ENCODE measurements at regions of chr11 and their contacts with region 1.

Region 1: GRCh38 chr11:304915-305843 is 2.4 kb upstream of the IFITM2 start:
- DNase-seq: peak in 6 of 9 experiments; percentile 55 to 84 (median 72)
- ATAC-seq: peak; percentile 30
- H3K4me3 ChIP-seq: no peak overlapping the region
- H3K4me3 Mint-ChIP-seq: peak overlapping the region; percentile 5
- H3K27ac ChIP-seq: peak overlapping the region in 1 of 2 experiments; percentile 40
- H3K27ac Mint-ChIP-seq: peak overlapping the region; percentile 43
- H3K4me1 ChIP-seq: peaks cover 59% of the 10 kb centered on the region
- H3K4me1 Mint-ChIP-seq: peaks cover 58% of the 10 kb centered on the region
- H3K27me3 ChIP-seq: no peaks in the 10 kb centered on the region
- H3K27me3 Mint-ChIP-seq: no peaks in the 10 kb centered on the region
- CTCF ChIP-seq: peak; percentile 75

Region 2: DNA sequence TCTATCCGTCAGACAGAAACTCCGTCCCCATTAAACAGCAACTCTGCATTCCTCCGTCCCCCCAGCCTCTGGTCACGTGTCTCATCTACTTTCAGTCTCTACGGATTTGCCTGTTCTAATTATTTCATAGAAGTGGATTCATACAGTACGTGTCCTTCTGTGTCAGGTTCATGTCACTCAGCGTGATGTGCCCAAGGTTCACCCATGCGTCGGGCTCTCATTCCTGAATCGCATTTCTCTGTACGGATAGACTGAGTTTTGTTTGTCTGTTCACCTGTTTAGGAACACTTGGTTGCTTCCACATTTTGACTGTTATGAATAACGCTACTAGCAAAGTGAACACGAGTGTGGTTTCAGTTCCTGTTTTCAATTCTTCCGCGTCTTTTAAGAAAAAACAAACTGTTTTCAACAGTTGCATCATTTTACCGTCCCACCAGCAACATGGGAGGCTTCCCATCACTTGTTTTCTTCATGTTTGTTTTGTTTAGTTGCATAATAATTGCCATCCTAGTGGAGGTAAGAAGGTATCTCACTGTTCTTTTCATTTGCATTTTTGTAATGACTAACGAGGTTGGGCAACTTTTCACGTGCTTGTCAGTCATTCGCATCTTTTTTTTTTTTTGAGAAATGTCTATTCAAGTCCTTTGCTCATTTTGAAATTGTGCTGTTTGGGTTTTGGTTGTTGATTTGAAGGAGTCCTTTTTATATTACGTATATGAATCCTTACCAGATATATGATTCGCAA is 35.9 kb before region 1 on chr11:
- CTCF ChIA-PET with region 1: interaction called, 4 read pairs
- POLR2A ChIA-PET with region 1: interaction called, 6 read pairs
- intact Hi-C with region 1: loop called in 1 of 2 experiments (anchors 5 kb)
- DNase-seq: peak in 5 of 9 experiments; percentile 60 to 90 (median 77)
- ATAC-seq: peak; percentile 69
- H3K4me3 ChIP-seq: peak overlapping the region; percentile 38 to 60
- H3K4me3 Mint-ChIP-seq: peak overlapping the region; percentile 85
- H3K27ac ChIP-seq: peak overlapping the region; percentile 76 to 96
- H3K27ac Mint-ChIP-seq: peak overlapping the region; percentile 98
- H3K4me1 ChIP-seq: peaks cover 23% of the 10 kb centered on the region
- H3K4me1 Mint-ChIP-seq: peaks cover 30% of the 10 kb centered on the region
- H3K27me3 ChIP-seq: no peaks in the 10 kb centered on the region
- H3K27me3 Mint-ChIP-seq: no peaks in the 10 kb centered on the region
- CTCF ChIP-seq: no peak

Region 3: GRCh38 chr11:288328-289144 is 16.6 kb before region 1 on chr11 and contains the start of gene PGGHG:
- CTCF ChIA-PET with region 1: interaction called, 49 read pairs
- POLR2A ChIA-PET with region 1: interaction called, 37 read pairs
- intact Hi-C with region 1: no loop called
- DNase-seq: peak in 7 of 9 experiments; percentile 53 to 78 (median 69)
- ATAC-seq: peak; percentile 25
- H3K4me3 ChIP-seq: peak within 1 kb of the TSS; percentile 56 to 94
- H3K4me3 Mint-ChIP-seq: peak within 1 kb of the TSS; percentile 99
- H3K27ac ChIP-seq: peak within 1 kb of the TSS; percentile 66 to 83
- H3K27ac Mint-ChIP-seq: peak within 1 kb of the TSS; percentile 99
- H3K4me1 ChIP-seq: peaks cover 55% of the 10 kb centered on the region
- H3K4me1 Mint-ChIP-seq: peaks cover 58% of the 10 kb centered on the region
- H3K27me3 ChIP-seq: peaks cover 0 to under 1% of the 10 kb centered on the region in 2 experiments
- H3K27me3 Mint-ChIP-seq: no peaks in the 10 kb centered on the region
- CTCF ChIP-seq: no peak
- total RNA-seq, gene PGGHG: 902 to 919 TPM

Region 4: GRCh38 chr11:355581-356458 is 50.6 kb after region 1 on chr11:
- CTCF ChIA-PET with region 1: interaction called, 102 read pairs
- POLR2A ChIA-PET with region 1: interaction called, 4 read pairs
- intact Hi-C with region 1: loop called (anchors 1 to 2 kb)
- DNase-seq: peak; percentile 64 to 94 (median 85)
- ATAC-seq: peak; percentile 61
- H3K4me3 ChIP-seq: peak overlapping the region; percentile 32 to 66
- H3K4me3 Mint-ChIP-seq: peak overlapping the region; percentile 84
- H3K27ac ChIP-seq: peak overlapping the region; percentile 76 to 86
- H3K27ac Mint-ChIP-seq: peak overlapping the region; percentile 95
- H3K4me1 ChIP-seq: peaks cover 43% of the 10 kb centered on the region
- H3K4me1 Mint-ChIP-seq: peaks cover 44% of the 10 kb centered on the region
- H3K27me3 ChIP-seq: no peaks in the 10 kb centered on the region
- H3K27me3 Mint-ChIP-seq: no peaks in the 10 kb centered on the region
- CTCF ChIP-seq: no peak

Region 5: DNA sequence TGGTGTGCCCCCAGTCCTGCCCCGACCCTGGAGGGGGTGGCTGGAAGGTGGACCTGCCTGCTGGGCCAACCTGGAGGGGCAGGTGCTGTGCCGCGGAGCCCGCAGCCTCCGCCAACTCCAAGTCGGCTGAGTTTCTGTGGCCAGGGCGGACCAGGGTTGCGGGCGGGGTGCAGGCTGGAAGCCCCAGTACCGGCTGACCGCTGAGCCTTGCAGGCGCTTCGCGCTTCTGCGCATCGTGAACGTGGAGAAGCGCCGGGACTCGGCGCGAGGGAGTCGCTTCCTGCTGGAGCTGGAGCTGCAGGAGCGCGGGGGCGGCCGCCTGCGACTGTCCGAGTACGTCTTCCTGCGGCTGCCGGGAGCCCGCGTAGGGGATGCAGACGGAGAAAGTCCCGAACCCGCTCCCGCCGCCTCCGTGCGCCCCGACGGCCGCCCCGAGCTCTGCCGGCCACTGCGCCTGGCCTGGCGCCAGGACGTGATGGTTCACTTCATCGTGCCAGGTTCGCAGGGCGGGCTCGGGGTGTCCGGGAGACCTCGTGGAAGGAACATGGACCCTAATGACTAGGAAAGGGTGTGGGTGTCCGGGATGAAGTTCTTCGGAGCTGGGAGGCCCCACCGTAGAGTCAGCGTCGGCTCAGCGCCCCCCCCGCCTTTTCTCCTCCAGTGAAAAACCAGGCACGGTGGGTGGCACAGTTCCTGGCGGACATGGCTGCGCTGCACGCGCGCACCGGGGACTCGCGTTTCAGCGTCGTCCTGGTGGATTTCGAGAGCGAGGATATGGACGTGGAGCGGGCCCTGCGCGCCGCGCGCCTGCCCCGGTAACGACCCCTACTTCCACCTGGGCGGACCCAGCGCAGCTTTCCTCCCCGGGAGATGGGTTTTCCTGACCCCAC is 74.3 kb after region 1 on chr11:
- CTCF ChIA-PET with region 1: no interaction called
- POLR2A ChIA-PET with region 1: no interaction called
- intact Hi-C with region 1: no loop called
- DNase-seq: no peak
- ATAC-seq: no peak
- H3K4me3 ChIP-seq: no peak overlapping the region
- H3K4me3 Mint-ChIP-seq: no peak overlapping the region
- H3K27ac ChIP-seq: no peak overlapping the region
- H3K27ac Mint-ChIP-seq: no peak overlapping the region
- H3K4me1 ChIP-seq: peaks cover 7% of the 10 kb centered on the region
- H3K4me1 Mint-ChIP-seq: peaks cover 5% of the 10 kb centered on the region
- H3K27me3 ChIP-seq: peaks cover 0 to 3% of the 10 kb centered on the region in 2 experiments
- H3K27me3 Mint-ChIP-seq: peaks cover 6% of the 10 kb centered on the region
- CTCF ChIP-seq: no peak

Region 6: GRCh38 chr11:406978-407739 is 102.0 kb after region 1 on chr11:
- CTCF ChIA-PET with region 1: no interaction called
- POLR2A ChIA-PET with region 1: no interaction called
- intact Hi-C with region 1: loop called (anchors 5 kb)
- DNase-seq: peak; percentile 89 to 99 (median 94)
- ATAC-seq: peak; percentile 86
- H3K4me3 ChIP-seq: peak overlapping the region in 1 of 2 experiments; percentile 19
- H3K4me3 Mint-ChIP-seq: no peak overlapping the region
- H3K27ac ChIP-seq: peak overlapping the region; percentile 46 to 73
- H3K27ac Mint-ChIP-seq: peak overlapping the region; percentile 82
- H3K4me1 ChIP-seq: peaks cover 25% of the 10 kb centered on the region
- H3K4me1 Mint-ChIP-seq: peaks cover 17% of the 10 kb centered on the region
- H3K27me3 ChIP-seq: no peaks in the 10 kb centered on the region
- H3K27me3 Mint-ChIP-seq: no peaks in the 10 kb centered on the region
- CTCF ChIP-seq: no peak

Region 7: DNA sequence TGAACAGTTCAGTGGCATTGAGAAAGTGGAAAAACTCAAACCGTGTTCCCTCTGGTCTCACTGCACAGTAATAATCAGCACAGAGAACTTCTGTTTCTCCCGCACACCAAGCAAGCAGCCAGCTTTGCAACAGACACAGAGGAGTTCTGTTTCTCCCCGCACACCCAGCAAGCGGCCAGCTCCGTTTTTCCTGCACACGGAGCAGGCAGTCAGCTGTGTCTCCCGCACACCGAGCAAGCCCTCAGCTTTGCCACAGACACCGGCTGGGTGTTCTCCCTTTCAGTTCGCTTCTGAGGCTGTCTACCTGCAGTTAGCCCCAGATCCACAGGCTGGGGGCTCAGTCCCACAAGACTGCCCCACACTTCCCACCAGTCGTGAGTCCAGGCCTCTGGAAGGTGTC is 432.2 kb after region 1 on chr11:
- CTCF ChIA-PET with region 1: no interaction called
- POLR2A ChIA-PET with region 1: no interaction called
- intact Hi-C with region 1: no loop called
- DNase-seq: peak in 1 of 9 experiments; percentile 16
- ATAC-seq: no peak
- H3K4me3 ChIP-seq: peak overlapping the region in 1 of 2 experiments; percentile 28
- H3K4me3 Mint-ChIP-seq: peak overlapping the region; percentile 74
- H3K27ac ChIP-seq: no peak overlapping the region
- H3K27ac Mint-ChIP-seq: no peak overlapping the region
- H3K4me1 ChIP-seq: peaks cover 9% of the 10 kb centered on the region
- H3K4me1 Mint-ChIP-seq: peaks cover 14% of the 10 kb centered on the region
- H3K27me3 ChIP-seq: no peaks in the 10 kb centered on the region
- H3K27me3 Mint-ChIP-seq: peaks cover 7% of the 10 kb centered on the region
- CTCF ChIP-seq: no peak